Mammary epithelial cell (primary cell): ENCODE measurements at regions of chr16 and their contacts with region 1.

Region 1: DNA sequence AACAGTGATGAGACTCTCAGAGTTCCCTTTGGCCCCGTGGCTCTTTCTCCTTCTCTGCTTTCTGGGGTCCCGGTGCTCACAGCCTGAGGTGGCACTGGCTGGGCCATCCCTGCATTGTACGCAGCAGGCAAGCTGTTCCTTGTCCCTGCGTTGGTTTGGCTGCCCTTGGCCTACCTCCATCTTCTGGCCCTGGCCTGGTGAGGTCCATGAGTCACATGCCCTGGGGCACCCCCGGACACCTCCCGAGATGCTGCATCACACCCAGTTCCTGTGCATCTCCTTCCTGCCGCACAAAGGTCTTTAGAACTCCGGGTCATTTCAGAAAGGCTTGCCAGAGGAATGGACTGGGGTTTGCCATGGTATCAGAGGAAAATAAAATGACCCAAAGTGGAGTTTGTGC is 9.5 kb downstream of the SULT1A2 start:
- DNase-seq: peak; percentile 69
- H3K4me3 ChIP-seq: no peak overlapping the region
- H3K27ac ChIP-seq: no peak overlapping the region
- H3K4me1 ChIP-seq: peaks cover 9% of the 10 kb centered on the region
- H3K27me3 ChIP-seq: no peaks in the 10 kb centered on the region
- CTCF ChIP-seq: no peak

Region 2: DNA sequence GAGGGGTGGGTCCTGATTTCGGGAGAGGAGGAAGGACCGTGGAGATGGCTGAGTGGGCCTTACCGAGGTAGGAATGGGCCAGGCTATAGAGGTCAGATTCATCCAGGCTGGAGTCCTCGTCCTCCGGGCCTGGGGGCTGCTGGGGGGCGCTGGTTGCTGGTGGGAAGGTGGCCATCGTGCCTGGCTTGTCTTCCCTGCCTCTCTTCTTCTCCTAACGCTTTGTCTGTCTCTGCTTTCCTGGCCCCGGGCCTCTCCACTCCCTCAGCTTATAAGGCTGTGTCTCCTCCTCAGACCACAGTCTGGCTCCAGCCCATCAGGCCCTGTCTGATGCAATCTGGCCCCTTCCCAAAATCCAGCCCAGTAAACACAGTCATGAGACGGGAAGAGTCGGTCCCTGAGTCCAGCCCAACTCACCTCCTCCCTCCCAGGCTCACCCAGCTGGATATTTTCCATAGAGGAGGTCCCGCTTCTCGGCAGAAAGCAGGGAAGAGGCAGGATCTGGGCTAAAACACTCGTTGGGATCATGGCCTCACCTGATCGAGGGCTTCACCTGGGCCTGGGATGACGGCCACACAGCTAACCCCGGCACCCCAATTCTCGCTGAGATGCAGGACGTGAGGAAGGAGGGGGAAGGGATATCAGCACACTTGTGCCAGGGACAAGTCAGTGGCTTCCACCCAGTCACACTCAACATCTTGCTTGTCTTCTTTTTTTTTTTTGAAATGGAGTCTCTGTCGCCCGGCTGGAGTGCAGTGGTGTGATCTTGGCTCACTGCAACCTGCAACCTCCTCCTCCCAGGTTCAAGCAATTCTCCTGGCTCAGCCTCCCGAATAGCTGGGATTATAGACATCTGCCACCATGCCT is 48.4 kb before region 1 on chr16 and contains the start of gene NUPR1:
- CTCF ChIA-PET with region 1: no interaction called
- dilution Hi-C with region 1: loop called (anchors 5 kb)
- in situ Hi-C with region 1: no loop called
- intact Hi-C with region 1: no loop called
- DNase-seq: peak; percentile 87
- H3K4me3 ChIP-seq: peak within 1 kb of the TSS; percentile 60 to 77 (median 60)
- H3K27ac ChIP-seq: peak within 1 kb of the TSS; percentile 65
- H3K4me1 ChIP-seq: peaks cover 18% of the 10 kb centered on the region
- H3K27me3 ChIP-seq: no peaks in the 10 kb centered on the region
- CTCF ChIP-seq: no peak
- total RNA-seq, gene NUPR1: 55.0 to 160 TPM

Region 3: GRCh38 chr16:28569021-28569420 is 18.4 kb before region 1 on chr16:
- CTCF ChIA-PET with region 1: no interaction called
- dilution Hi-C with region 1: no loop called
- in situ Hi-C with region 1: no loop called
- intact Hi-C with region 1: loop called (anchors 2 kb)
- DNase-seq: no peak
- H3K4me3 ChIP-seq: no peak overlapping the region
- H3K27ac ChIP-seq: no peak overlapping the region
- H3K4me1 ChIP-seq: no peaks in the 10 kb centered on the region
- H3K27me3 ChIP-seq: no peaks in the 10 kb centered on the region
- CTCF ChIP-seq: no peak